ENCODE measurements at regions of chr7 and their contacts with region 1.

Region 1: GRCh38 chr7:29408841-29409243 is 154.8 kb upstream of the PRR15 start:
- DNase-seq: no peak

Region 2: GRCh38 chr7:28926871-28927597 is 481.8 kb before region 1 on chr7:
- intact Hi-C with region 1: loop called (anchors 10 kb)
- DNase-seq: peak; percentile 93

Region 3: GRCh38 chr7:28939844-28940544 is 468.8 kb before region 1 on chr7:
- intact Hi-C with region 1: loop called in 1 of 2 experiments (anchors 10 kb)
- DNase-seq: no peak

Region 4: GRCh38 chr7:29113384-29114103 is 295.3 kb before region 1 on chr7:
- intact Hi-C with region 1: loop called in 1 of 2 experiments (anchors 10 kb)
- DNase-seq: no peak

Region 5: DNA sequence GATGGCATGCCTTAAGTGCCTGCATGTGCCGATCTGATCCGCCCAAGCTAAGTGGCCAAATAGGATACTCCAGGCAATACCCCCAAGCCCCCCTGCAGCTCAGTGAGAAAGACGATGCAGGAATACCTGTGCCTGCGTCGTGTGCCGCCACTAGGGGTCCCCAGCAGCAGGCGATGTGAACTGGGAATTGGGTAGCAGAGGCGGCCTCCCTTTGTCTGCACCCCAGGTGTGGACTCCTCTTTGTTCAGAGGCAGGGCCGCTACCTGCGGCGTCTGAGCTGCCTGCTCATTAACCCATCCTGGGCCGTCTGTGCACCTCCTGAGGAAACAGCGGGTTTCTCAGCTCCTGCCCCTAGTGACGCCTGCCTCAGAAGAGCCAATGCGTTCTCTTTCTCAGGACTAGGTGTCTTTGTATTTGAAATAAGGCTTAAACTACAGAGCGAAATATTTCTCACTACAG is 219.1 kb before region 1 on chr7:
- intact Hi-C with region 1: loop called (anchors 2 to 10 kb)
- DNase-seq: peak; percentile 83

Region 6: GRCh38 chr7:29228289-29229011 is 180.4 kb before region 1 on chr7:
- intact Hi-C with region 1: no loop called
- DNase-seq: no peak

Region 7: GRCh38 chr7:29239638-29240037 is 169.2 kb before region 1 on chr7:
- intact Hi-C with region 1: no loop called
- DNase-seq: no peak

Region 8: DNA sequence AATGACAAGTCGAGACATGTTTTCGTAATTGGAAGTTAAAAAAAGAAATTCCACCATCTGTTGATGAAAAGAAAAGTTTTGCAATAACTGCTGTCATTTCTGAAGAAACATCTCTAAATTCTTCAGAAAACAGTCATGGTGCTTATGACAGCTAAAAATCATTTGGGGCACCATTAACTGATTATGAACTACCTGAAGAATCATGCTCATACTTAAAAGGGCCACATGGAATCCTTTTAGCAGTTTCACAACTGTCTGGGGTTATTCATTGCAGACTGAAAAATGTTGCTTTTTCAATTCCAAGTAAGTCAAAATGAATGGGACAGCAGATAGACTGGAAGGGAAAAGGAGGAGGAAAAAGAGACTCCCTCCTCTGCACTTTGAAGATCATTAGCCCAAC is 80.0 kb before region 1 on chr7:
- intact Hi-C with region 1: loop called in 1 of 2 experiments (anchors 5 kb)
- DNase-seq: no peak

Region 9: GRCh38 chr7:29362380-29362779 is 46.5 kb before region 1 on chr7:
- intact Hi-C with region 1: loop called in 1 of 2 experiments (anchors 1 kb)
- DNase-seq: no peak

Measured in posterior vena cava (tissue), 2 donors.